ENCODE measurements at regions of chr7 and their contacts with region 1.

Region 1: GRCh38 chr7:135211179-135211945 is at the start of gene WDR91:
- DNase-seq: peak; percentile 89 to 98
- H3K4me3 ChIP-seq: peak within 1 kb of the TSS; percentile 77 to 87
- H3K27ac ChIP-seq: peak within 1 kb of the TSS; percentile 93 to 94
- H3K4me1 ChIP-seq: peaks cover 0 to 19% of the 10 kb centered on the region in 2 donors
- H3K27me3 ChIP-seq: no peaks in the 10 kb centered on the region
- CTCF ChIP-seq: no peak
- total RNA-seq, gene WDR91: 66.7 TPM

Region 2: GRCh38 chr7:134646425-134647305 is 564.7 kb before region 1 on chr7 and contains the start of gene BPGM:
- intact Hi-C with region 1: loop called (anchors 1 kb)
- DNase-seq: peak; percentile 96 to 99
- H3K4me3 ChIP-seq: peak within 1 kb of the TSS; percentile 73 to 81
- H3K27ac ChIP-seq: peak within 1 kb of the TSS; percentile 74 to 84
- H3K4me1 ChIP-seq: peaks cover 2 to 6% of the 10 kb centered on the region in 2 donors
- H3K27me3 ChIP-seq: no peaks in the 10 kb centered on the region
- CTCF ChIP-seq: no peak
- total RNA-seq, gene BPGM: 19.2 TPM

Region 3: DNA sequence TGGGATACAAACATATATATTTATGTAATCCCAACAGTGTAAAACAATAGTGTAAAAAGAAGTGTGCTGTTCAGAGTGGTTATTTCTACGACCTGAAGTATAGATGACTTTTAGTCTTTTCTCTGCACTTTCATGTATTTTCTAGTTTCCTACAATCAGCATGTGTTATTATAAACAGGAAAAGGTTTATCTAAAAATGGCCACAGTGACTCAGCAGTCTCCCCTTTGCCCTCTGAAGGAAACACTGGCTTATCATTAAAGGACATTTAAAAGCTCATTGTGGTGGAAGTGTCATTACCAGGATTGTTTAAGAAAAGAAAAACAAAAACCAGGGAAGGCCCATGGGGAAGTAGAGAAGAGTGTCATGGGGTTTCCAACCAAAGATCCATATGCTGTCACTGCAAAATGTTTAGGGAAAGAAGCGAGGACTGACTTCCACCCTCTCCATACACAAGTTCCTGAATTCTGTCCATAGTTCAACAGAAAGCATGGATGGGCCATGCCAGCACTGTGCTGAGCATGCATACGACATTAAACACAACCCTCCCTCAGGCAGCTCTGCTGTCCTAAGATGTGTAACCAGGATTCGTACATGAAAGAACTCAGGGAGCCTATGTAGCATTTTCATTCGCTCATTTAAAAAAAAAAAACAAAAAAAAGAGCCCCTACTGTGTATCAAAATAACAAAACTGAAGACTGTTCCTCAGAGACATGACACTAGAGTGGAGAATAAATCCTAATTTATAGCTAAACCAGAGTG is 51.1 kb before region 1 on chr7:
- intact Hi-C with region 1: no loop called
- DNase-seq: no peak
- H3K4me3 ChIP-seq: no peak overlapping the region
- H3K27ac ChIP-seq: peak overlapping the region; percentile 65 to 73
- H3K4me1 ChIP-seq: peaks cover 9 to 31% of the 10 kb centered on the region in 2 donors
- H3K27me3 ChIP-seq: no peaks in the 10 kb centered on the region
- CTCF ChIP-seq: no peak

Region 4: GRCh38 chr7:135170274-135170997 is 40.9 kb before region 1 on chr7 and contains the start of gene CYREN:
- intact Hi-C with region 1: loop called (anchors 1 kb)
- DNase-seq: peak; percentile 81 to 97
- H3K4me3 ChIP-seq: peak within 1 kb of the TSS; percentile 68 to 92
- H3K27ac ChIP-seq: peak within 1 kb of the TSS; percentile 95 to 98
- H3K4me1 ChIP-seq: peaks cover 15 to 27% of the 10 kb centered on the region in 2 donors
- H3K27me3 ChIP-seq: no peaks in the 10 kb centered on the region
- CTCF ChIP-seq: peak; percentile 80 to 86 (median 81)
- total RNA-seq, gene CYREN: 21.6 TPM

Region 5: DNA sequence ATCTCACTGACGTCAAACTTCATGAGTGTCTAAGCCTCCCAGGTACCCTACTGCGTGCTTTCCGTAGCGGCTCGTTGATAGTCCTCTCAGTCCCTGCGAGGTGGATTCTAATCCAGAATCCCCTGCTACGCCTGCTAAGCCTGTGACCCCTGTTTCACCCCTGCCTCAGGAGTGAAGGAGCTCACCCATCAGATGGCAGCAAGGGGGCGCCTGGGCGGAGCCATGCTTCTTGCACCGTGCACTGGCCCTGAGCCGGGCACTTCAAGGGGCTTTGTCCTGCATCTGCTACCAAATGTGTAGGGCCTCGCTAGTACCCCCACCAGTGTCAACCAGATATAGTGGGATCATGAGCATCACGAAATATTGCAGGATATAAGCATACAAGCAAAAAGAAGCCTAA is 21.4 kb after region 1 on chr7:
- intact Hi-C with region 1: no loop called
- DNase-seq: no peak
- H3K4me3 ChIP-seq: no peak overlapping the region
- H3K27ac ChIP-seq: no peak overlapping the region
- H3K4me1 ChIP-seq: no peaks in the 10 kb centered on the region
- H3K27me3 ChIP-seq: no peaks in the 10 kb centered on the region
- CTCF ChIP-seq: no peak

Region 6: GRCh38 chr7:135509903-135510602 is 298.7 kb after region 1 on chr7 and contains the start of gene CNOT4:
- intact Hi-C with region 1: loop called (anchors 5 kb)
- DNase-seq: peak; percentile 91 to 98
- H3K4me3 ChIP-seq: peak within 1 kb of the TSS; percentile 66 to 83
- H3K27ac ChIP-seq: peak within 1 kb of the TSS; percentile 86 to 95
- H3K4me1 ChIP-seq: peaks cover 0 to 23% of the 10 kb centered on the region in 2 donors
- H3K27me3 ChIP-seq: no peaks in the 10 kb centered on the region
- CTCF ChIP-seq: no peak
- total RNA-seq, gene CNOT4: 14.8 TPM

Region 7: DNA sequence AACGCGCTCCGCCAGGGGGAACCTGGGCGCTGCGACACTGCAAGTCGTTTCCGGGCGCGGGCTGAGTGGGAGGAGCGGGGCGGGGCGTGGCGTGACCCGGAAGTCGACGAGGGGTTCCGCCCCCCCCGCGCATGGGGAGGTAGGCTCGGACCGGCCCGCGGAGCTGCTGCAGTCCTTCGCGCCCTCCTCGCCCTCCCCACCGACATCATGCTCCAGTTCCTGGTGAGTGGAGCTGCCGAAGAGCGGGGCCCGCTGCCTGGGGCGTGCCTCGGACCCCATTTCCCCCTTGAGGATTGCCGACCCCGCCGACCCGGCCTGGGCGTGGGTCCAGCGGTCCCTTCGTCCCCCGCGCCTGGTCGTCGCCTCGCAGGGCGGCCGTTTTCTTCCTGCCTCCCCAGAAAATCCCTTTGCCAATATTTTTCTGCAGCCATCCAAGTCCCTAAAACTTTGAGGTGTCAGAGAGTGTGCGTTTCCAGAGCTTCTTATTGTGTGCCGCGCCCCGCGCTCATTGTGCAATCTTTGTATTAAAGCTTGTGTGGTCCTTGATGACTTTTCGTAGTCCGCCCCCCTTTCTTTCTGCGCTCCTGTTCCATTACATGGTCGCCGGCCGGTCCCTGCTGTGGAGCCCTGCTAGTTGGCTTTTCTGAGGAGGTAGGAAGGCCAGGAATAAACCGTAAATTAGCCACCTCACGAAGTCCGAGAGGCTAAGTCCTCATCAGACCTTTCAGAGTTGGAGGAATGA is 451.2 kb after region 1 on chr7 and contains the start of gene STMP1:
- intact Hi-C with region 1: loop called (anchors 5 kb)
- DNase-seq: peak; percentile 81 to 98
- H3K4me3 ChIP-seq: peak within 1 kb of the TSS; percentile 73 to 86
- H3K27ac ChIP-seq: peak within 1 kb of the TSS; percentile 87 to 96
- H3K4me1 ChIP-seq: peaks cover 0 to 19% of the 10 kb centered on the region in 2 donors
- H3K27me3 ChIP-seq: no peaks in the 10 kb centered on the region
- CTCF ChIP-seq: peak in 1 of 3 experiments; percentile 95
- total RNA-seq, gene STMP1: 10.1 TPM